RWPE1 (cell line): ENCODE measurements at regions of chr2 and their contacts with region 1.

Region 1: GRCh38 chr2:172452845-172453244 is 25.5 kb downstream of the ITGA6 start:
- DNase-seq: no peak
- H3K27ac ChIP-seq: peak overlapping the region; percentile 42
- CTCF ChIP-seq: no peak

Region 2: DNA sequence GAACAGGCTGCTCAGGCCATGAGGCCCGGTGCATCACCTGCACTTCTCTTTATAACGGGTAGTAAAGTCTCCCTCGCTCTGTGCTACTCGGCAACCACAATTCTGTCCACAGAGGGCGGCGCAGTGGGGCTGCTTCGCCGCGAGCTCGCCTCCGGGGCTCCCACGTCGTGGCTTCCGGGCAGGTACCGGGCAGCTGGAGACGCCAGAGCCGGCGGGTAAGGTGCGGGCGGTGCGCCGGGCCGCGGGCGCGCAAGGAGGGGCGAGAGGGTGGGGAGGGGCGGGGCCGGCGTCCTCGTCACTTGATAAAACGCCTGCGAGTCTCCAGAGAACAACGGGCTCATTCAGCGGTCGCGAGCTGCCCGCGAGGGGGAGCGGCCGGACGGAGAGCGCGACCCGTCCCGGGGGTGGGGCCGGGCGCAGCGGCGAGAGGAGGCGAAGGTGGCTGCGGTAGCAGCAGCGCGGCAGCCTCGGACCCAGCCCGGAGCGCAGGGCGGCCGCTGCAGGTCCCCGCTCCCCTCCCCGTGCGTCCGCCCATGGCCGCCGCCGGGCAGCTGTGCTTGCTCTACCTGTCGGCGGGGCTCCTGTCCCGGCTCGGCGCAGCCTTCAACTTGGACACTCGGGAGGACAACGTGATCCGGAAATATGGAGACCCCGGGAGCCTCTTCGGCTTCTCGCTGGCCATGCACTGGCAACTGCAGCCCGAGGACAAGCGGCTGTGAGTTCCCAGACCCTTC is 25.4 kb before region 1 on chr2 and contains the start of gene ITGA6:
- CTCF ChIA-PET with region 1: interaction called, 3 read pairs
- POLR2A ChIA-PET with region 1: interaction called, 12 read pairs
- DNase-seq: peak; percentile 80
- H3K27ac ChIP-seq: peak within 1 kb of the TSS; percentile 94
- CTCF ChIP-seq: no peak

Region 3: GRCh38 chr2:172545408-172546084 is 92.7 kb after region 1 on chr2:
- CTCF ChIA-PET with region 1: no interaction called
- POLR2A ChIA-PET with region 1: no interaction called
- DNase-seq: no peak
- H3K27ac ChIP-seq: no peak overlapping the region
- CTCF ChIP-seq: no peak